ENCODE measurements at regions of chr7 and their contacts with region 1.

Region 1: DNA sequence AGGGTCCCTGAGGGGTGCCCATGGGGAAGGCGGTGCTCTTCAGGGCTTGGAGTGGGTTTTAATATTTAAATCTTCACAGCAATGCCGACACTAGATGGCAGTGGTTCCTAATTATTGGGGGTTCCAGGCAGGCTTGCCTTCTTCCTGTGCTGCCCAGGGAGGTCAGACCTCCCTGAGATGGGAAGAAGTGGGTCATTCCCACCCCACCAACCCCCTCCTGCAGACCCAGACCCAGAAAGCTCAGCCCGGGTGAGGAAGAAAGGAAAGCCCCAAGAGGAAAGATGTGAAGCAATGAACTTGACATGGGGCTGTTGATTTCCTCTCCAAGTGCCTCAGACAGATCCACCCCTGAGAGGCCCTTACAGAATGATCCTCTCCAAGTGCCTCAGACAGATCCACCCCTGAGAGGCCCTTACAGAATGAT is 85.1 kb upstream of the LANCL2 start:
- ATAC-seq: peak; percentile 84 to 99 (median 92)
- H3K4me3 ChIP-seq: no peak overlapping the region
- H3K27ac ChIP-seq: no peak overlapping the region
- H3K4me1 ChIP-seq: peaks cover 3 to 5% of the 10 kb centered on the region in 2 donors

Region 2: DNA sequence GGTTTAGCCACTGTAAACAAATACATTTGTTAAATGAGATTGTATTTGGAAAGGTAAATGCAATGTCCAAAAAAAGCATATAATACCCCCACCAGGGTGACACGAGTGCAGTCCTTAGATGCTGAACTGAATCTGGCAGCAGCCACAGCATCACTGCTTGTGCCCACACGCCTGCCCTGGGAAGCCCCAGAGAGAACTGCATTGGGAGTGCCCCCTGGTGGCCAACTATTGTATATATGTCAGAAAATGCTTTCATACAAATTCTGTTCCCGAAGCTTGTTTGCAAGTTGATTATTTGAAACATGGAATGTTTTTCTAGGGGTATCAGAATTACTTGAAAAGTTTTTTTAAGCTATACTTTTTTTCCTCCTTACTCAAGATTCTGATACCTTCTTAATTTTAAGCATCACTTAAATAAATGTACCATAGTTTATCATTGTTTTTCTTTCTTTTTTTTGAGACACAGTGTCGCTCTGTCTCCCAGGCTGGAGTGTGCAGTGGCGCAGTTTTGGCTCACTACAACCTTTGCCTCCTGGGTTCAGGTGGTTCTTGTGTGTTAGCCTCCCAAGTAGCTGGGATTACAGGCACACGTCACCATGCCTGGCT is 135.2 kb after region 1 on chr7:
- in situ Hi-C with region 1: loop called in 7 of 9 experiments (anchors 10 to 25 kb)
- ATAC-seq: peak; percentile 70 to 91 (median 79)
- H3K4me3 ChIP-seq: no peak overlapping the region
- H3K27ac ChIP-seq: no peak overlapping the region
- H3K4me1 ChIP-seq: peaks cover 1 to 2% of the 10 kb centered on the region in 2 donors

Region 3: DNA sequence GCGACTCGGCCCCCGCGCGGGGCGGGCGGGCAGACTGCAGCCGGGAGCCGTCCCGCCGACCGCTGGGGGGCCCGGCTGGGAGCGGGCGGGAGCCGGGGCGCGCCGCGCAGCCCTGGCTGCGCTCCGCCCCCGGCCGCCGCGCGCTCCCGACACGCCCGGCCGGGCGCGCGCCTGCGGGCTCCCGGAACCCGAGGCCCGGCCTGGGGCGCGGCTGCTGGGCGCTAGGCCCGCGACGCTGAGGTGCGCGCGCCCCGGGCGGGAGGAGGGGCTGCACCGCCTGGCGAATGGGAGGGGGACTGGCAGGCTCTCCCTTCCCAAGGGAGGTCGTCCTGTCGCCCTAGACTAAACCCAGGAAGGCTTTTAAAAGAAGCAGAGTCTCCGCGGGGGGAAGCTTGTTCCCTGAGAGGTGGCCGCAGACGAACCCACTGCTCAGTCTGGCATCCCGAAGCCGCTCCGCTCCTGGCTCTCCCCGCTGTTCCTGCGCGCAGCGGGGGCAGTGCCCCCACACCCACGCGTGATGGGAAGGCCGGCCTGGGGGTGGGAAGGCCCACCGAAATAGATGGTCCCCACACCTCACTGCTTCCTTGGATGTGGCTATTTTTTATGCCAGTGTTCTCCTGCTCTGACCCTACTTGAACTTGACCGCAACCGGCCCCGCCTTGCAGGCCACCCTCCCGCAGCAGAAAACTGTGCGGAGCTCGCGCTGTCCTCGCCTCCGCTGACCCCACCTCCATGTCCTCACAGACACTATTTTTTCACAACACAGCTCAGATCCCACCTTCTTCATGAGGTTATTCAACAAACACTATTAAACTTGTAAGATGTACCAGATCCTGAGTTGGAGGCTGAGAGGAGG is 292.6 kb after region 1 on chr7 and contains the start of gene VOPP1:
- in situ Hi-C with region 1: loop called in 2 of 9 experiments (anchors 25 kb)
- ATAC-seq: peak; percentile 32 to 85 (median 76)
- H3K4me3 ChIP-seq: peak within 1 kb of the TSS; percentile 78 to 99 (median 95)
- H3K27ac ChIP-seq: peak within 1 kb of the TSS; percentile 71
- H3K4me1 ChIP-seq: peaks cover 33 to 35% of the 10 kb centered on the region in 2 donors
- total RNA-seq, gene VOPP1: 43.9 to 131 (median 56.3) TPM

Region 4: GRCh38 chr7:55593515-55594318 is 313.7 kb after region 1 on chr7:
- in situ Hi-C with region 1: loop called in 1 of 9 experiments (anchors 25 kb)
- ATAC-seq: peak; percentile 27 to 94 (median 58)
- H3K4me3 ChIP-seq: no peak overlapping the region
- H3K27ac ChIP-seq: no peak overlapping the region
- H3K4me1 ChIP-seq: no peaks in the 10 kb centered on the region